Ovary (tissue), 10 donors: ENCODE measurements at regions of chr12 and their contacts with region 1.

Region 1: DNA sequence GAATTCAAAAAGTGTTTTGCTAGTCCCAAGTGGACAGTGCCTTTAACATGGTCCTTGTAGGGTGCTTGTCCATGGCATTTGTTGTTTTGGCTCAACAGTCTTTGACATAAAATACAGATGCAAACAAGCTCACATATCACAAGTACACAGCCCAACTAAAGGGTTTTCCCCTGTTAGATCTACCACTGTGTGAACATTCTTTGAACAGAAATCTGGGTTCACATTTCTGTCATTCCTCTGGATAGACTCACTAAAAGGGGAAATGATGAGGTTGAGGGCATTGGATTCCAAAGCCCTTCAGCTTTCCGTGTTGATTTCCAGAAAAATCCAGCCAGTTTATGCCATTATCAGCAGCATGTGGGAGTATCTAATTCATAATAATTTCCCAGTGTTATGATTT is 54.1 kb downstream of the EP400 start:
- DNase-seq: no peak
- H3K4me3 ChIP-seq: no peak overlapping the region
- H3K27ac ChIP-seq: no peak overlapping the region
- H3K4me1 ChIP-seq: no peaks in the 10 kb centered on the region
- H3K27me3 ChIP-seq: no peaks in the 10 kb centered on the region
- CTCF ChIP-seq: no peak
- EP300 ChIP-seq: no peak
- POLR2A ChIP-seq: no peak

Region 2: GRCh38 chr12:130423991-130424857 is 1579.6 kb before region 1 on chr12:
- intact Hi-C with region 1: no loop called
- DNase-seq: no peak
- H3K4me3 ChIP-seq: no peak overlapping the region
- H3K27ac ChIP-seq: no peak overlapping the region
- H3K4me1 ChIP-seq: no peaks in the 10 kb centered on the region
- H3K27me3 ChIP-seq: no peaks in the 10 kb centered on the region
- CTCF ChIP-seq: no peak
- EP300 ChIP-seq: no peak
- POLR2A ChIP-seq: no peak

Region 3: DNA sequence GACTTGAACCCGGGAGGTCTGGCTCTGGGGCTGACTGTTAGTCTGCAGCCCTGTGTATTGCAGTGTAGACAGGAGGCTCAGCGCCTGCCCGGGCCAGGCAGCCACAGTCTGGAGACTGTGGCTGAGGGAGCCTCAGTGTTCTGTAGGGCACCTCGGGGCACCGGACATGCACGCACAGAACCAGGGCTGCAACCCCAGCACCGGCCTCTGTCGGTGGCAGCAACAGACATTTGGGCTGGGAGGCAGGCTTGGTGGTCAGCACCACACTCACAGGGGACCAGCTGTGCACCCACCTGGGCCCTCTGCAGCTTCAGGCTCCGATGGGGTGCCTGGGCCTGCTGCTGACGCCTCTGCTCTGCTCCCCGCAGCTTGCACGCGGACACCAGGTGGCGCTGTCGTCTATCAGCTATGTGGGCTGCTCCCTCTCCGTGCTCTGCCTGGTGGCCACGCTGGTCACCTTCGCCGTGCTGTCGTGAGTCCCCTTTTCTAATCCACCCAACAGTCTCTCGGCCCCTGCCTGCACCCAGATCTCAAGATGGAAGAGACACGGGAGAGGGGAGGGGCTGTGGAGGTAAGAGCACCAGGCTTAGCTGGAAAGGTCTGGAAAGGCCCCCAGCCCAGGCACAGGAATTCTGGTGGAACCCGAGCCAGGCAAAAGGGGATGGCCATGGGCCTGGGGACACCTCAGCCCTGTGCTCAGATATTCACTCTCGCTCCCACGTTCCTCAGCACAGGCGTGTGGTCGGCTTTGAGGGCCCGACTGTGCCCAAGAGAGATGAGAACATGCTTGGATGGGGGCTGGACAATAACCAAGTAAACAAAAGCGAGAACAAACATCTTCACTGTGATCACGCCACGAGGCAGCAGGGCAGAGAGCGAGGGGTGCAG is 899.1 kb before region 1 on chr12:
- intact Hi-C with region 1: loop called in 1 of 4 experiments (anchors 10 kb)
- DNase-seq: peak; percentile 85 to 94 (median 90)
- H3K4me3 ChIP-seq: no peak overlapping the region
- H3K27ac ChIP-seq: no peak overlapping the region
- H3K4me1 ChIP-seq: peaks cover 1% of the 10 kb centered on the region
- H3K27me3 ChIP-seq: no peaks in the 10 kb centered on the region
- CTCF ChIP-seq: peak; percentile 84 to 96 (median 96)
- EP300 ChIP-seq: no peak
- POLR2A ChIP-seq: no peak

Region 4: GRCh38 chr12:131608740-131609690 is 394.8 kb before region 1 on chr12:
- intact Hi-C with region 1: loop called in 1 of 4 experiments (anchors 10 kb)
- DNase-seq: peak; percentile 50 to 84 (median 73)
- H3K4me3 ChIP-seq: no peak overlapping the region
- H3K27ac ChIP-seq: no peak overlapping the region
- H3K4me1 ChIP-seq: peaks cover 2% of the 10 kb centered on the region
- H3K27me3 ChIP-seq: no peaks in the 10 kb centered on the region
- CTCF ChIP-seq: peak; percentile 63 to 68 (median 68)
- EP300 ChIP-seq: no peak
- POLR2A ChIP-seq: no peak

Region 5: GRCh38 chr12:132044661-132045412 is 41.0 kb after region 1 on chr12:
- intact Hi-C with region 1: loop called in 1 of 4 experiments (anchors 1 kb)
- DNase-seq: no peak
- H3K4me3 ChIP-seq: no peak overlapping the region
- H3K27ac ChIP-seq: no peak overlapping the region
- H3K4me1 ChIP-seq: no peaks in the 10 kb centered on the region
- H3K27me3 ChIP-seq: no peaks in the 10 kb centered on the region
- CTCF ChIP-seq: no peak
- EP300 ChIP-seq: no peak
- POLR2A ChIP-seq: no peak